Activated T-helper 2 cell treated with anti-CD3 and anti-CD28 coated beads, Interferon-gamma antibody, Interleukin-2, Interleukin-4, amounts not matched to agents 10 μg/mL and 5 μg/mL and 100 μg/mL, durations not matched to agents 14 hours and 24 hours and 36 hours (primary cell): ENCODE measurements at regions of chr4 and their contacts with region 1.

Region 1: DNA sequence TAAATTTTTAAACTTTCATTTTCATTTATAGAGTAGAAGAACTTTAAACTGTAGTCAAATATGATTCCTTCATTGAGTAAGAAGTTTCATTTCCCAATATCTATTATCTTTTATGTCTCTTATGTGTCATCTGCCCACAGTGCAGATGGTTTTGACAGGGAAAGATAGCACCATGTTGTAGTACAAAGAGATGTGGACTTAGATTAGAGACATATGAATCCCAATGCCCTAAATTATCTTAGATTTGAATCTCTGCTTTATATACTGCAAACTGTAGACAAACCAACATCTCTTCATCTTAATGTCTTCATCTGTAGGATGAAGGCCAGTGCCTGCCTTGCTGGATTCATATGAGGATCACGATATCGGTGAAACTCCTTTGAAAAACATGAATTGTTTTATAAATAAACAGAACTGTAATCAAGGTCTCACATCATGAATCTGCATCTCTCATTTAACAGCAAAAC is 217.5 kb downstream of the BANK1 start:
- DNase-seq: no peak
- H3K4me3 Mint-ChIP-seq: no peak overlapping the region
- H3K27ac Mint-ChIP-seq: no peak overlapping the region
- H3K4me1 Mint-ChIP-seq: peaks cover 14% of the 10 kb centered on the region
- H3K27me3 Mint-ChIP-seq: peaks cover 18% of the 10 kb centered on the region

Region 2: GRCh38 chr4:100823066-100823992 is 1184.7 kb before region 1 on chr4:
- intact Hi-C with region 1: loop called (anchors 5 kb)
- DNase-seq: peak; percentile 9
- H3K4me3 Mint-ChIP-seq: no peak overlapping the region
- H3K27ac Mint-ChIP-seq: peak overlapping the region; percentile 76
- H3K4me1 Mint-ChIP-seq: peaks cover 22% of the 10 kb centered on the region
- H3K27me3 Mint-ChIP-seq: no peaks in the 10 kb centered on the region

Region 3: GRCh38 chr4:102390438-102390837 is 382.4 kb after region 1 on chr4:
- intact Hi-C with region 1: loop called (anchors 2 kb)
- DNase-seq: no peak
- H3K4me3 Mint-ChIP-seq: no peak overlapping the region
- H3K27ac Mint-ChIP-seq: peak overlapping the region; percentile 44
- H3K4me1 Mint-ChIP-seq: peaks cover 23% of the 10 kb centered on the region
- H3K27me3 Mint-ChIP-seq: peaks cover 10% of the 10 kb centered on the region